Activated CD8-positive, alpha-beta T cell treated with anti-CD3 and anti-CD28 coated beads for 36 hours (primary cell): ENCODE measurements at regions of chr3 and their contacts with region 1.

Region 1: GRCh38 chr3:101685870-101686412 is 577 bp downstream of the RPL24 start:
- DNase-seq: no peak
- ATAC-seq: no peak
- H3K4me3 Mint-ChIP-seq: peak overlapping the region; percentile 100
- H3K27ac Mint-ChIP-seq: peak overlapping the region; percentile 100
- H3K4me1 Mint-ChIP-seq: peaks cover 39% of the 10 kb centered on the region
- H3K27me3 Mint-ChIP-seq: no peaks in the 10 kb centered on the region
- CTCF ChIP-seq: no peak

Region 2: DNA sequence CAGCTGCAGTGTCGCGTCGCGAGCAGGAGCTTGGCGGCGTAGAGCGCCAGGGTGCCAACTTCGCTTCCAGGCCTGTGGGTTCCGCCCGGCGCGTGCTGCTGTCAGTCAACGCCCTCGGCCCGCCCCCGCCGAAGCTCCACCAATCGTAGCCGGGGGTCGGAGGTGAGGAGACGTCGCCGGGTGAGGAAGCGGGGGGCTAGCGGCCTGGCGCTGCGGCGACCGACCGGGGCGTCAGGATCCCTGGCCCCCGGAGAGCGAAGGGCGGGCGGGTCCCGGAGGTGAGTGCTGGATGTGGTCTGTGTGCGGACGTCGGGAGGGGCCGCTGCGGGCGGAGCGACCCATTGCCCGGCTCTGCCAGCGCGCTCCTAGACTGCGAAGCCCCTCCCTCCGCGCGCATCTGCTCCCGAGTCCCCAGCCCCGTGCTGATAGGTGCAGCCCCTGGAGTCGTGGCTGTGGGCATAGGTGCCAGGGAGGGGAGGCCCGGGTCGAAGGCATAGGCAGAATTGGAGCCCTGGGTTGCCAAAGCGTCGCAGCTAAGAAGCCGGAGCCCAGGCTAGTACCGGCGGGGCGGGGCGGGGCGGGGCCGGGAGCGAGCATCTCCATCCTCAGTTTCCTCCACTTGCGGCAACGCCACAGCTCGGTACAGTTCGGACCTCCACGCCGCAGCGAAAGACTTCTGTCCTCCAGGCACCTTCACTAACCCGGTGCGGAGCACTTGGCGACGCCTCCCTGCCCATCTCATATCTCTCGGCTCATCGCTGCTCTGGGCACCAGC is 93.3 kb after region 1 on chr3 and contains the start of gene NXPE3:
- CTCF ChIA-PET with region 1: interaction called, 5 read pairs
- POLR2A ChIA-PET with region 1: interaction called, 5 read pairs
- intact Hi-C with region 1: loop called (anchors 5 kb)
- DNase-seq: peak; percentile 97
- ATAC-seq: peak; percentile 91
- H3K4me3 Mint-ChIP-seq: peak within 1 kb of the TSS; percentile 85
- H3K27ac Mint-ChIP-seq: peak within 1 kb of the TSS; percentile 98
- H3K4me1 Mint-ChIP-seq: peaks cover 48% of the 10 kb centered on the region
- H3K27me3 Mint-ChIP-seq: no peaks in the 10 kb centered on the region
- CTCF ChIP-seq: no peak
- total RNA-seq, gene NXPE3: 20.9 to 21.6 TPM